Psoas muscle (tissue), 8 donors: ENCODE measurements at regions of chr9 and their contacts with region 1.

Region 1: DNA sequence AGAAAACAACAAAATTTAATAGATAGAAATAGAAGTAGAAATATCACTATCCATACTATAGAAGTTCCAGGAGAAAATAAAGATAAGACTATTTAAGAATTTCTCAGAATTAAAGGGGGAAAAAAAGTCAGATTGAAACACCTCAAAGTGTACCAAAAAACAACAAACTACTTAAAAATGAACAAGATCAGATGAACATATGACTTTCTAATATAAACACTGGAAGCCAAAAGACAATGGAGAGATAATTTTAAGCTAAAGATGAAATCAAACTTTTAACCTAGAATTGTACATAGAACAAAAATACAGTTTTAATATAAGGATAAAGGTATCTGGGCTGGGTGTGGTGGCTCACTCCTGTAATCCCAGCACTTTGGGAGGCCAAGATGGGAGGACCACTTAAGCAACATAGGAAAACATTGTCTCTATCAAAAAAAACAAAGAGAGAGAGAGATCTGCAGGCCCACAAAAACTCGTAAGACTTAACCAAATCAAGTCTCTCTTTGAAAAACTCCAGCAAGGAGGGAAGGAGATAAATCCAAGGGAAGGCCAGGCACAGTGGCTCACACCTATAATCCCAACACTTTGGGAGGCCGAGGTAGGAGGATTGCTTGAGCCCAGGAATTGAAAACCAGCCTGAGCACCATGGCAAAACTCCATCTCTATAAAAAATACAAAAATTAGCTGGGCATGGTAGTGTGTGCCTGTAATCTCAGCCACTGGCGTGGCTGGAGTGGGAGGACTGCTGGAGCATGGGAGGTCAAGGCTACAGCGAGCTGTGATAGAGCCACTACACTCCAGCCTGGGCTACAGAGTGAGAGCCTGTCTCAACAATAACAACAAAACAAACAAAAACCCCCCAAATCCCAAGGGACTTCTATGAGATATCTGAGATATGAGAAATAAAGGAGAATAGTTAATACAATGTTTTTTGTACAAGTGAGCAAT is 32.4 kb downstream of the ABHD17B start:
- DNase-seq: no peak
- ATAC-seq: no peak
- H3K4me3 ChIP-seq: no peak overlapping the region
- H3K27ac ChIP-seq: no peak overlapping the region
- H3K4me1 ChIP-seq: peaks cover 17% of the 10 kb centered on the region
- H3K27me3 ChIP-seq: no peaks in the 10 kb centered on the region
- CTCF ChIP-seq: no peak

Region 2: DNA sequence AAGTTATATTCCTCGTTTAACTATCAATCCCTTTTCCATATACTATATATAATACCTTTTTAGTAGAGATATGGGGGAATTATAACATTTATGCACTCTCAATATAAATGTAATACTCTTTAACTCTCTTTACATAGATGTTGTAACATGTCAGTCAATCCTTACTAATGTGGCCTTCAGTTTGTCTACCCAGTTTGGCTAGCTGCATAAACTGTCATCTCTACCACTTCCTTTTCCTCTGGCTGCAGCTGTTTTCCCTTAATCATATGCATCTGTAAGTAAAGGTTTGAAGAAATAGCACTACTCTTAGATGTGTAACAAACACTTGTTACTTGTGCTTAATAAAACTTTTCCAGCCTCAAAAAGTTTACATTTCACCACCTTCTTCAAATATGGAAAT is 19.0 kb after region 1 on chr9:
- intact Hi-C with region 1: loop called in 1 of 2 experiments (anchors 2 kb)
- DNase-seq: no peak
- ATAC-seq: no peak
- H3K4me3 ChIP-seq: no peak overlapping the region
- H3K27ac ChIP-seq: no peak overlapping the region
- H3K4me1 ChIP-seq: peaks cover 62% of the 10 kb centered on the region
- H3K27me3 ChIP-seq: no peaks in the 10 kb centered on the region
- CTCF ChIP-seq: no peak

Region 3: DNA sequence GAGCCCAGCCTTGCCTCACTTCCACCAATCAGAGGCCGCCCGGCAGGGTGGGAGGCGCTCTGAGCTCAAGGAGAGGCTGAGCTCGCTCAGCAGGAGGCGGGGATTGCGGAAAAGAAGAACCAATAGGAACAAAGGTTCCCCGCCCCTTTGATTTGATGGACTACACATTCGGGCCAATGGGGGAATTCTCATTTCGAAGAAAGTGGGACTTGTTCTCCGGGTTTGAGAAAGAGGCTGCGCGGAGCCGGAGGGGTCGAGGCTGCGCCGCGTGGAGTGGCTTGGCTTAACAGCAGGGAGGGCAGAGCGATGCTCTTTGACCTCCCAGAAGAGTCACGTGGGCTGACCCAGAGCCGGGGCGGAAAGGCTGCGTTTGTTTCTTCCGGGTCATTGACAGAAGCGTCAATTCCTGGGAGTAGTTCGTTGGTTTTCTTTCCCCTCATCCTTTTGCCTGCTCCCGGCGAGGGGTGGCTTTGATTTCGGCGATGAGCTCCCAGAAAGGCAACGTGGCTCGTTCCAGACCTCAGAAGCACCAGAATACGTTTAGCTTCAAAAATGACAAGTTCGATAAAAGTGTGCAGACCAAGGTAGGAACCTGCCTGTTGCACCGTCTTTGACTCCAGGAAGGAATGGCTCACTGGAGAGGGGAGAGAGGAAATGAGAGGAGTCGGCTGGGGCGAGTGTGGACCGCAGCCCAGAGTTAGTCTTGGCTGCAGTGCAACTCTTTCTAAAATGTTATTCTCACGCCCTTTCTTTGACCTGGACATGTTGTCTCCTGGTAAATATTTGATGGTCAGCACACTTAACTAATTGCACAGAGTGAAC is 32.9 kb after region 1 on chr9 and contains the start of gene C9orf85:
- intact Hi-C with region 1: loop called in 1 of 2 experiments (anchors 5 kb)
- DNase-seq: peak; percentile 99
- ATAC-seq: peak; percentile 96 to 99 (median 98)
- H3K4me3 ChIP-seq: peak within 1 kb of the TSS; percentile 98
- H3K27ac ChIP-seq: peak within 1 kb of the TSS; percentile 96
- H3K4me1 ChIP-seq: peaks cover 41% of the 10 kb centered on the region
- H3K27me3 ChIP-seq: no peaks in the 10 kb centered on the region
- CTCF ChIP-seq: no peak
- total RNA-seq, gene C9orf85: 5.5 to 9.3 (median 7.7) TPM